ENCODE measurements at regions of chr10 and their contacts with region 1.

Region 1: DNA sequence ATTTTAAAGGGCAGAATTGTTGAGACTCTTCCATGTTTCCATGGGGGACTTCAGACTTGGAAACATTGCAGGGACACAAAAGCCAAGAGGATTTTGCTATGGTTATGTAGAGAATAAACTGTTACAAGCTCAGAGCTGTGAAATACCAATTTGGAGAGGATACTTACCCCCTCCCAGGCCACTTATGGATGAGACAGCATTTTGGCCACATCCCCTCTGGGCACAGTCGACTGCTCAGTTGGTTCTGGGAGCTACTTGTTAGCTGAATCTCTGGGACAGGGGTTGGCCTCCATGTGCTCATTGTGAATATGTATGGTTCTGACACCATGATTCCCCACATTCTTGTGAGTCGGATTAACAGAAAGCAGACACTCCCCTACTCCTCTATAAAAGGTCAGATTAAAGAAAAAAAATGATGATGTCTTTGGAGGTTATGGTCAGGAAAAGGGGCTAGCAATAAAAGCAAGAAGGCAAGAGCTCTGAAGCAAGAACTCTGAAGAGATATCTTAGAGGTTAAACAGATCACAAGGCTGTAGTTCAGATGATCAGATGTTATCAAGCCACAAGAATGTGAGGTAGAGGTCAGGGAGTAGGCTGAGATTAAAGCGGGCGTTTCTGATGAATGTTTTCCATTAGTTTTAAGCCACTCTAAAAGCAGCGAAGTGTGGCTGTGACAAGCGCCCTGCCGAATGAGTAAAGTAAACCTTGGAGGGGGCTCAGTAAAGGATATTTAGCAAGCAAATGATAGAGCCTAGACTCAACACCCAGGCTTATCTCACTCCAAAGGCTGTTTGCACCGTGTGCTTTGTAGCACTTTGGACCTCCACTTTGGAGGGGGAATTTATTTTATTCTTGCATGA is 17.2 kb downstream of the STAMBPL1 start:
- DNase-seq: peak in 1 of 2 experiments; percentile 52
- H3K4me3 ChIP-seq: 0 out of 2 replicates have a peak overlapping the region, but pooled peaks have one; percentile 14
- H3K27ac ChIP-seq: peak overlapping the region; percentile 60
- H3K4me1 ChIP-seq: peaks cover 29% of the 10 kb centered on the region
- H3K27me3 ChIP-seq: no peaks in the 10 kb centered on the region
- CTCF ChIP-seq: no peak

Region 2: GRCh38 chr10:88858491-88858890 is 38.7 kb before region 1 on chr10:
- CTCF ChIA-PET with region 1: no interaction called
- POLR2A ChIA-PET with region 1: interaction called, 9 read pairs
- intact Hi-C with region 1: loop called (anchors 5 kb)
- DNase-seq: peak in 1 of 2 experiments; percentile 83
- H3K4me3 ChIP-seq: no peak overlapping the region
- H3K27ac ChIP-seq: peak overlapping the region; percentile 81
- H3K4me1 ChIP-seq: peaks cover 21% of the 10 kb centered on the region
- H3K27me3 ChIP-seq: no peaks in the 10 kb centered on the region
- CTCF ChIP-seq: no peak

Region 3: DNA sequence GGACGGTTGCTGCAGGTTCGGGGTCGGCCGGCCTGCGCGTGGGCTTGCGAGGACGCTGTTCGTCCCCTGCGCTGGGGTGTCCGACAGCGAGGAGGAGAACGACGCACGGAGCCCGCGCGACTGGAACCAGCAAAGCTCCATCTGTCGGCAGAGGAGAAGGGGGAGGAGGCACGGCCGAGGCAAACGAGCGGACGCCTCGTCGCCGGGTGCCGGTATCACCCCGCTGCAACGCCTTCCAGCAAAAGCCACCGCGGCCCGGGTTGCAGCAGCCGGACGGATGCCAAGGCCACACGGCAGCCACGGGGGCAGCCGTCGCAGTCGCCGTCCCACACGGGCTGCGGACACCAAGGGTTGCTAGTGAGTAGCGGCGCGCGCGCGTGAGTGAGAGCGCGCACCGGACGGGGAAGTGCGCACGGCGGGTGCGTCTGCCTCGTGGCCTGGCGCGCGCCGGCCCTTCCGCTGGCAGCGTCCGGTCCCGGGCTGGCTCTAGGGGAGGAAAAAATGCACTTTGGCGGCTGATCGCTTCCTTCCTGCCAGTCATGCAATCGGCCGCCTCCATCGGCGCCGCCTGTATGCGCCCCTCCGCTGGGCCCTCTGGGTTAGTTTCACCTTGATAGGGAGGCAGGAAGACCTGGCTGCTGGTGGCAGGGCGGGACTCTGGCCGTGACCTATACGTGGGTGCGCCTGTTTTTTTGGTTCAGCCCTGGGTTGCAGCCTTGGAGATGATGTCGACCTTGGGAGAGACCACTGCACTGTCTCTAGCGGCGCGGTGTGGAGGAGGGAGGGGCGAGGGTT is 16.7 kb before region 1 on chr10:
- CTCF ChIA-PET with region 1: no interaction called
- POLR2A ChIA-PET with region 1: interaction called, 11 read pairs
- intact Hi-C with region 1: loop called (anchors 2 kb)
- DNase-seq: peak; percentile 49 to 70
- H3K4me3 ChIP-seq: peak overlapping the region; percentile 82
- H3K27ac ChIP-seq: peak overlapping the region; percentile 92
- H3K4me1 ChIP-seq: peaks cover 27% of the 10 kb centered on the region
- H3K27me3 ChIP-seq: no peaks in the 10 kb centered on the region
- CTCF ChIP-seq: peak; percentile 27; the same call in 1 of the 2 replicates

Region 4: DNA sequence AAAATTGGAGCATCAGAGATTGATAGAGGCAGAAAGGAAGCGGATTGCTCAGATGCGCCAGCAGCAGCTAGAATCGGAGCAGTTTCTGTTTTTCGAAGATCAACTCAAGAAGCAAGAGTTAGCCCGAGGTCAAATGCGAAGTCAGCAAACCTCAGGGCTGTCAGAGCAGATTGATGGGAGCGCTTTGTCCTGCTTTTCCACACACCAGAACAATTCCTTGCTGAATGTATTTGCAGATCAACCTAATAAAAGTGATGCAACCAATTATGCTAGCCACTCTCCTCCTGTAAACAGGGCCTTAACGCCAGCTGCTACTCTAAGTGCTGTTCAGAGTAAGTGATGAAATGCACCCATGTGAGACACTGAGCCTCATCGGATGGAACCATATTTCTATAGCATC is 15.9 kb after region 1 on chr10:
- CTCF ChIA-PET with region 1: no interaction called
- POLR2A ChIA-PET with region 1: no interaction called
- intact Hi-C with region 1: no loop called
- DNase-seq: no peak
- H3K4me3 ChIP-seq: no peak overlapping the region
- H3K27ac ChIP-seq: no peak overlapping the region
- H3K4me1 ChIP-seq: no peaks in the 10 kb centered on the region
- H3K27me3 ChIP-seq: no peaks in the 10 kb centered on the region
- CTCF ChIP-seq: no peak

Region 5: DNA sequence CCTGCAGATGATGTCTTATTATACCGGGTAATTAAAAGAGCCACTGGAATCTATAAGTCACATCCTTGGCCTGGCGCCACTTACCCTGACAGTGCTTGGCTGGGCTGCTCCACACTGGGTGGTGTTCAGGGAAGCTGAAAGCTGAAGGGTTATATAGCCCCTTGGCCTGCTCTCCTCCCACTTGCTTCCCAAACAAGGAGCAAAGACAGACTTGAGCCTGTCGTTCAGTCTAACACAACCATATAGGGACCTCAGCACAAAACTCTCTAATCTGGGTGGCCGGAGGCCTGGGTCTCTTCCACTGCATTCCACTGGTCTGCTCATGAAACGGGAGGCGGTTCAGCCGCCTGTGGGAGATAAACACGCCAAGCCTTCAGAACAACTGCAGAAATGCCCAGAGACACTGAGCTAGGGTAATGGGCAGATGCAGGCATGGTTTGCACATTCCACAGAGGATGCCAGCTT is 55.5 kb after region 1 on chr10 and contains the start of gene ACTA2:
- CTCF ChIA-PET with region 1: no interaction called
- POLR2A ChIA-PET with region 1: no interaction called
- intact Hi-C with region 1: no loop called
- DNase-seq: no peak
- H3K4me3 ChIP-seq: no peak within 1 kb of the TSS
- H3K27ac ChIP-seq: no peak within 1 kb of the TSS
- H3K4me1 ChIP-seq: no peaks in the 10 kb centered on the region
- H3K27me3 ChIP-seq: no peaks in the 10 kb centered on the region
- CTCF ChIP-seq: no peak
- total RNA-seq, gene ACTA2: 5.3 and 8.4 TPM in 2 replicates